ENCODE measurements at regions of chr1 and their contacts with region 1.

Region 1: GRCh38 chr1:54406339-54407153 is at the start of gene SSBP3:
- DNase-seq: peak; percentile 91
- H3K4me3 Mint-ChIP-seq: peak within 1 kb of the TSS; percentile 88
- H3K27ac Mint-ChIP-seq: peak within 1 kb of the TSS; percentile 83
- H3K4me1 Mint-ChIP-seq: peaks cover 72% of the 10 kb centered on the region
- H3K27me3 Mint-ChIP-seq: no peaks in the 10 kb centered on the region
- total RNA-seq, gene SSBP3: 98.0 and 110 TPM in 2 replicates

Region 2: DNA sequence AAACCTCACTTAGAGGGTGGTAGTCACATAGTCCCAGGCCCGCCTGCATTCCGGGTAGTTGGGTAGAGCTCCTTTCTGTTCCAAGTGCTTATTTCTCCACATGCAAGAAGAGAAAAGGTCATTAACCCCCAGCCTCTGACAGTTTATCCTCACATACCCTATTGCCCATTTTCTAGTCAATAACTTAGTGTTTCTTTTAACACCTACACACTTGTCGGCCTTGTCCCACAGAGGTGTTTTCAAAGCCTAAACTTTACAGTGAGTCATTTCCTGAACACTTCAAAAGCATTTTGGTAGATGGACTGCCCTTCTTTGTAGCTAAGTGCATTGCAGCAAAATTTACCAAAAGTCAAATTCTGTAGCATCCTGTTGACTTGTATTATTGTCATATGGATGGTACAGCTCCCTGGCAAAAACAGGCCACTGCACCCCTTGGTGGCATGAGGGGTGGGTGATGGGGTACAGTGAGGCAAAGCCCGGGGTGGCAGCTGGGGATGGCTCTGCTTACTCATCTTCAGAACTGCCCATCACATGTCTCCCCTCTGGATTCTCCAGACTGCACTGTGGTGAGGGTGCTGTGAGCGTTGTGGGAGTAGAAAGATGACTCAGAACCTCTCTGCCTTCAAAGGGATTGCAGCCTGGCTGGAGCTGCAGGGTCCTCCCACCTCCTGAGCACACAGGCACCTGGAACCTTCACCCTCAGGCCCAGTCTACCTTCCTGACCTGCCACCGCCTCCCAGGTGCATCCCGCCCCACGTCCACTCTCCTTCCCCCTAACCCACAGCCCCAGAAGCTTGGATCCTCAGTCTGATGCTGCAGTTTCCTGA is 993.2 kb before region 1 on chr1:
- intact Hi-C with region 1: loop called (anchors 10 kb)
- DNase-seq: peak; percentile 73
- H3K4me3 Mint-ChIP-seq: peak overlapping the region; percentile 68
- H3K27ac Mint-ChIP-seq: peak overlapping the region; percentile 95
- H3K4me1 Mint-ChIP-seq: peaks cover 86% of the 10 kb centered on the region
- H3K27me3 Mint-ChIP-seq: no peaks in the 10 kb centered on the region

Region 3: GRCh38 chr1:54121482-54122134 is 284.9 kb before region 1 on chr1:
- intact Hi-C with region 1: loop called (anchors 5 kb)
- DNase-seq: peak; percentile 49
- H3K4me3 Mint-ChIP-seq: no peak overlapping the region
- H3K27ac Mint-ChIP-seq: no peak overlapping the region
- H3K4me1 Mint-ChIP-seq: no peaks in the 10 kb centered on the region
- H3K27me3 Mint-ChIP-seq: peaks cover 11% of the 10 kb centered on the region

Region 4: DNA sequence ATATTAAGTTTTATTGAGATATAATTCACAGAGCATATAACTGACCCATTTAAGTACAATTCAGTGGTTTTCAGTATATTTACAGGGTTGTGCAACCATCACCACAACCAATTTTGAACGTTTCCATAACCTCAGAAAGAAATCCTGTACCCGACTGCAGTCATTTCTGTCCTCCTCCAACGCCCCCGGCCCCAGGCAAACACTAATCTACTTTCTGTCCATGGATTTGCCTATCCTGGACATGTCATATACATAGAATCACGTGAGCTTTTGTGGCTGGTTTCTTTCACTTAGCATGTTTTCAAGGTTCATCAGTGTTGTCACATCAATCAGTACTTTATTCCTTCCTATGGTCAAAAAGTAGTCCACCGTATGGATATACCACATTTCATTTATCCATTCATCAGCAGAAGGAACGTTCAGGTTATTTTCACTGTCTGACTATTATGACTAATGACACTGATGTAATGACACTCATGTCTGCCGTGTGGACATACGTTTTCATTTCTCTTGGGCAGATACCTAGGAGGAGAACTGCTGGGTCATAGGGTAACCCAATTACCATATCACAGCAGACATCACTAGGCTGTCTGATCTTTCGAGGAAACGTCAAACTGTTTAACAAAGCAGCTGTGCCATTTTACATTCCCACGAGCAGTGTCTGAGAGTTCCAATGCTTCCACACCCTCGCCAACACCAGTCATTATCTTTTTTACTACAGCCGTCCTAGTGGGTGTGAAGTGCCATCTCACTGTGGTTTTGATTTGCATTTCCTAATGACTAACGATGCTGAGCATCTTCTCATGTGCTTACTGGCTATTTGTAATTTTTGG is 175.8 kb before region 1 on chr1:
- intact Hi-C with region 1: loop called (anchors 1 kb)
- DNase-seq: no peak
- H3K4me3 Mint-ChIP-seq: no peak overlapping the region
- H3K27ac Mint-ChIP-seq: peak overlapping the region; percentile 86
- H3K4me1 Mint-ChIP-seq: peaks cover 27% of the 10 kb centered on the region
- H3K27me3 Mint-ChIP-seq: no peaks in the 10 kb centered on the region

Region 5: DNA sequence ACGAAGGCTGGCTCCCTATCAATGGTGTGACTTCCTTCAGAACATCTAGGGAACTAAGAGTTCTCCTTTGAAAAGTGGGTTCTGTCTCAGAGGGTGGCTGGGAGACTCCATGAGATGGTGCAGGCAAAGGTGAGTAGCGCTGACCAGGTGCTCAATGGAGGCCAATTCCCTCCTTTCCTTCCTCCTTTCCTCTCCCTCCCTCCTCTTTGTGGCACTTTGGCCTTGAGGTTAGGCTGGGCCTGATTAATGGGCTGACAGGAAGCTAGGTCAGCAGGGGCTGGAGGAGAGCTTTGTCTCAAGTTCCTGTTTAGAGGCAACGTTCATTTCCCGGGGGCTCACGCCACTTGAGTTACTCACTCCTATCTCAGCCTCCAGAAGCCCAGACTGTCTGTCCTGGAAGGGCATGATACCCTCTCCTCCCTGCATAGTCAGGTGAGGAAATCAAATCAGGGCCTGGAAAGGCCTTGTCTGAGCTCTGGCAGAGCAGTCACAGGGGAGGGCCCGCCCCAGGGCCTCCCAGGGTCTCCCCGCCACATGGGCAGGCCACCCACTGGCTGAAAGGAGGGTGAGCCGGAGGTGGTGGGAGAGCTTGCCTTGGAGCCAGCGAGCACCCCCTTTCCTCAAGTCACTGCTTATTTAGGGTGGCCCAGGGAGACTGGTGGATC is 58.1 kb after region 1 on chr1:
- intact Hi-C with region 1: loop called (anchors 2 kb)
- DNase-seq: no peak
- H3K4me3 Mint-ChIP-seq: no peak overlapping the region
- H3K27ac Mint-ChIP-seq: no peak overlapping the region
- H3K4me1 Mint-ChIP-seq: peaks cover 39% of the 10 kb centered on the region
- H3K27me3 Mint-ChIP-seq: no peaks in the 10 kb centered on the region

Region 6: GRCh38 chr1:54800899-54801759 is 394.6 kb after region 1 on chr1 and contains the start of gene TTC22:
- intact Hi-C with region 1: loop called (anchors 2 kb)
- DNase-seq: peak; percentile 56
- H3K4me3 Mint-ChIP-seq: peak within 1 kb of the TSS; percentile 85
- H3K27ac Mint-ChIP-seq: peak within 1 kb of the TSS; percentile 80
- H3K4me1 Mint-ChIP-seq: peaks cover 65% of the 10 kb centered on the region
- H3K27me3 Mint-ChIP-seq: no peaks in the 10 kb centered on the region
- total RNA-seq, gene TTC22: 2.2 and 2.3 TPM in 2 replicates

Measured in activated T-helper 1 cell treated with anti-CD3 and anti-CD28 coated beads, Interleukin-12 subunit alpha, Interleukin-12 subunit beta, Interleukin-2, Interleukin-4 antibody, amounts not matched to agents 30 ng/mL and 10 ng/mL and 1 ng/mL, durations not matched to agents 14 hours and 24 hours and 36 hours (primary cell).